IMR-90 (cell line): ENCODE measurements at regions of chr1 and their contacts with region 1.

Region 1: DNA sequence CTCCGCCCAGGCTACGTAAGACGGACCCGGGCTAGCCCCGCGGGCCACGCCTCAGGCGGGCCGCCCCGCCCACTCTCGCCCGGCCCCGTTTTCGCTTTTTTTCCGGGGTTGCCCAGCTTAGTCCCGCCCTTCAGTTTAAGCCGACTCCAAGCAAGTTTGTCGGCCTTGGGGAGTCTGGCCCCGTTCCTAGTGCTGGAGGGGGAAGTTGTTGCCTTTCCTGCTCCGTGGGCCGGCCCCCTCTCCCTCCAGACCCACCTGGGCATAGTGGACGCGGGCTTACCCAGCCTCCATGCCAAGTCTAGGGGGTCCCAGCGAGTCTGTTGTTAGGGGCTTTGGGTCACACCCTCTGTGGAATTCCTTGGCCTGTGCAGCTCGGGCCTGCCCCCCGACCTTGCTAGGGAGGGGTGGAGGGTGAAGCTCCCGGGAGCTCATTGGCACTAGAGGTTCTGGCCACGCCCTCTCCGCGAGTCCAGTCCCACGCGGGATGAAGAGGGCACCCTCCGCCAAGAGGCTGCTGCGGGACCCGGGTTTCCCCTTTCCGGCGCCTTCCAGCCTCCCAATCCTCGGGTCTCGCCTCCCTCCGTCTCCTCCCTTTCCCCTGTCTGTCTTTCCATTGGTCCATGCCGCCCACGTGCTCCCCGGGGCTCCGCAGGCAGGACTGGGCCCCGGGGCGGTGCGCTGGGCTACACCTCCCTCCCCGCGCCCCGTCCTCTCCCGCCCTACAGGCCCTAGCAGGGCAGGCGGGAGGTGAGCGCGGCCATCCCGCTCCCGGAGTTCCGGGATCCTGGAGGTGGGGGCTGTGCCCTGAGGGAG is 3.3 kb downstream of the RUSC1 start:
- DNase-seq: peak; percentile 93
- ATAC-seq: peak; percentile 73
- H3K4me3 ChIP-seq: peak overlapping the region; percentile 58
- H3K27ac ChIP-seq: peak overlapping the region; percentile 95
- H3K4me1 ChIP-seq: peaks cover 18% of the 10 kb centered on the region; the same call in 1 of the 2 replicates
- H3K27me3 ChIP-seq: no peaks in the 10 kb centered on the region
- CTCF ChIP-seq: no peak
- POLR2A ChIP-seq: peak; percentile 64
- RAD21 ChIP-seq: no peak

Region 2: DNA sequence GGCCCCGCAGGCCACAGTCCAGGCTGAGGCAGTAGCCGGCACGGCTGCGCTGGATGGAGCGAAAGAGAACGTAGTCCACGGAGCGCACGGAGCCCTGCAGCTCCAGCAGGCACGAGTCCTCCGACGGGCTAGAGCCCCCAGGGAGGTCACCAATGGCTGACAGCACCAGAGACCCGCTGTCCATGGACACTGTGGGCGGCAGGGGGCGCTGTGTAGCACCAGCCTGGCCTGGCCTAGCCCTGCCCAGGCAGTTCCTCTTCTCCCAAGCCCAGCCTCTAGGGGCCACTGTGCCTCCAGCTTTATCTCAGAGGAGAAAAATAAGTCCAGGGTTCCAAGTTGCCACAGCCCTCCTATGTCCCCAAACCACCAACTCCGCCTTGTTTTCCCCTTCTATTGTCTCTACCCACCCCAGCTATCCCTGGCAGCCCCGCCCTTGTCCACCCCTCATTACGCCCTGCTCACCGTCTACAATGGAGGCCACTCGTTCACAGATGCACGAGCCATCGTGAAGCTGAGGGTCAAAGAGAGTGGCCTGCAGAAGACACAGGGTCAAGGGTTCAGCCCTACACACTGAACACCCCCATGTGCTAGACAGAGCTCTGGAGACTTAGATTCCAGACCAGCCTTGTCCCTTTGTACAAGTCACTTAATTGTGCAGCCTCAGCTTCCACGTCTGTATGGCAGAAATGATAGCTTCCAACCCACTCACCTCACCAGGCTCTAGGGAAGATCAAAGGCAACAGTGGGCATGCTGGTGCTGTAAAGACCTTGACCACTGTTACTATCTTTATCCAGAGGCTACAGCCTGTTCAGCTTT is 73.2 kb before region 1 on chr1:
- CTCF ChIA-PET with region 1: interaction called, 6 read pairs
- POLR2A ChIA-PET with region 1: no interaction called
- dilution Hi-C with region 1: no loop called
- in situ Hi-C with region 1: no loop called
- intact Hi-C with region 1: loop called (anchors 1 kb)
- DNase-seq: peak; percentile 85
- ATAC-seq: peak; percentile 78
- H3K4me3 ChIP-seq: no peak overlapping the region
- H3K27ac ChIP-seq: peak overlapping the region; percentile 12; the same call in 1 of the 2 replicates
- H3K4me1 ChIP-seq: peaks cover 15% of the 10 kb centered on the region
- H3K27me3 ChIP-seq: no peaks in the 10 kb centered on the region
- CTCF ChIP-seq: peak; percentile 100
- POLR2A ChIP-seq: peak; percentile 34; the same call in 1 of the 2 replicates
- RAD21 ChIP-seq: peak; percentile 93

Region 3: DNA sequence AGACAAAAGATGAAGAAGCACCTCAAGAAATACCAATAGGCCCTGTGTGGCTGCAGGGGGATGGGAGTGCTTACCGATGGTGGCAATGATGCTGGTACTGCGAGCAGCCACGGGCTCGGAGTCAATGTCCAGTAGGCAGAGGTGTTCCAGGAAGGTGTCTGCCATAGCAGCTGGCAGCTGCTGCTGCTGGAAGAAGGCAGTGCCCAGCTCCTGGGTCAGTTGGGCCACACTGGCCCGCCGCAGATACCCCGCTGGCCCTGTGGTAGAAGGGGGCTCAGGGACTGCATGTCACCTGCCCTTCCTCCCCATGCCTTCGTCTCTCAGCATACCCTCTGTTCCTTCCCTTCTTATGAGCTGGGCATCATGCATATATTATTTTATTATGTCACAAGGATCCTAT is 24.0 kb before region 1 on chr1:
- CTCF ChIA-PET with region 1: no interaction called
- POLR2A ChIA-PET with region 1: interaction called, 12 read pairs
- dilution Hi-C with region 1: no loop called
- in situ Hi-C with region 1: no loop called
- intact Hi-C with region 1: no loop called
- DNase-seq: no peak
- ATAC-seq: no peak
- H3K4me3 ChIP-seq: no peak overlapping the region
- H3K27ac ChIP-seq: no peak overlapping the region
- H3K4me1 ChIP-seq: no peaks in the 10 kb centered on the region
- H3K27me3 ChIP-seq: peaks cover 33% of the 10 kb centered on the region
- CTCF ChIP-seq: no peak
- POLR2A ChIP-seq: no peak
- RAD21 ChIP-seq: no peak

Region 4: DNA sequence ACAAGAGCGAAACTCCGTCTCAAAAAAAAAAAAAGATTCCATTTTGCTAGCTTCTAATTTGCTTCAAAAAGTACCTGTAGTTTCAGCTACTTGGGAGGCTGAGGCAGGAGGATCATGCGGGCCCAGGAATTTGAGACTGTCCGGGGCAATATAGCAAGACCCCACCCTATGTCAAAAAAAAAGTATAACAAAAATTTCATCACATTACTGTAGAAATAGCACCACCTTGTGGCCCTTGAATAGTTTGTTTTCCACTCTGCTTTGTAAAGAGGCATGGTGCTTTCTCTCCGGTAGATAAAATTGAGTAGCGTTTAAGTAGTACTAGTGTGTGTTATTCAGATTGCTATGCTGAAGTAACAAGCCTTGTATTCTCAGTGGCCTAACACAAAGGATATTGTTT is 267.8 kb after region 1 on chr1:
- CTCF ChIA-PET with region 1: no interaction called
- POLR2A ChIA-PET with region 1: no interaction called
- dilution Hi-C with region 1: no loop called
- in situ Hi-C with region 1: no loop called
- intact Hi-C with region 1: loop called (anchors 5 kb)
- DNase-seq: peak; percentile 68
- ATAC-seq: peak; percentile 76
- H3K4me3 ChIP-seq: no peak overlapping the region
- H3K27ac ChIP-seq: no peak overlapping the region
- H3K4me1 ChIP-seq: no peaks in the 10 kb centered on the region
- H3K27me3 ChIP-seq: no peaks in the 10 kb centered on the region
- CTCF ChIP-seq: peak; percentile 60
- POLR2A ChIP-seq: no peak
- RAD21 ChIP-seq: peak; percentile 69